SK-N-SH (cell line): ENCODE measurements at regions of chr3 and their contacts with region 1.

Region 1: DNA sequence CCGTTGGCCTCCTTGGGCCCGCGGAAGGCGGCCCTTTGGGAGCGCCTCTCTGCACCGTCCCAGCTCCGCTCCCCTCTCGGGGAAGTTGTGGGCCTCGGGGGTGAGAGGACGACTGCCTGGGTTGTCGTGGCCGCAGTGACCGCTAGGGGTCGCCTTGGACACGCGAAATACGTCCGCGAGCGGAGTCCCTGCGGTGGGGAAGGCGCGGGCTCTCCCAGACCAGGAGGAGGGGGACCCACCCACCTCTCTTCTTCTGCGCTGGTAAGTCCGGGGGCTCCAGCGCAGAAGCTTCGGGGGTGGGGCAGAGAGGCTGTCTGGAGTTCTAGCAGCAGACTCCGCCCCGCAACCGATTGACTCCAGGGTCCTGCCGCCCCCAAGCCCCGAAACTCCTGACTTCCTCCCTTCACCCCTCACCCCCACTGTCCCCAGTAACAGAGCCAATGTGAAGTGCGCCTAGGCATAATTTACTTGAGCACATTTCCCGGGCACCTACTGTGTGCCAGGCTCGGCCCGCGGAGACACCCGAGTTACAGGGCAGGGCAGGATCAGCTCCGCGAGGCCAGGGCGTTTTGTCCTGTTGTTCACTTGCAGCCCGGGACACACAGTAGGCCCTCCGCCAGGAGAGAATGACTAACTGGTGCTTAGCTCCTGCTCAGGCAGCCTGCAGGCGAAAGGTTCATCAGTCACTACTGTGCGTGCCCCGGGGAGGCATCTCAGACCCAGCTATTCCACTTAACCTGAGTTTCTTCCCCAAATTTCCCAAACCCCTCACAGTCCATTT is 32.8 kb downstream of the DNASE1L3 start:
- DNase-seq: peak; percentile 93
- H3K4me3 ChIP-seq: peak overlapping the region; percentile 41 to 56
- H3K27ac ChIP-seq: no peak overlapping the region
- H3K4me1 ChIP-seq: peaks cover 0 to 4% of the 10 kb centered on the region in 2 experiments; a peak in 1 of 4 replicates
- H3K27me3 ChIP-seq: no peaks in the 10 kb centered on the region
- CTCF ChIP-seq: peak; percentile 89
- EP300 ChIP-seq: no peak
- RAD21 ChIP-seq: peak; percentile 78

Region 2: DNA sequence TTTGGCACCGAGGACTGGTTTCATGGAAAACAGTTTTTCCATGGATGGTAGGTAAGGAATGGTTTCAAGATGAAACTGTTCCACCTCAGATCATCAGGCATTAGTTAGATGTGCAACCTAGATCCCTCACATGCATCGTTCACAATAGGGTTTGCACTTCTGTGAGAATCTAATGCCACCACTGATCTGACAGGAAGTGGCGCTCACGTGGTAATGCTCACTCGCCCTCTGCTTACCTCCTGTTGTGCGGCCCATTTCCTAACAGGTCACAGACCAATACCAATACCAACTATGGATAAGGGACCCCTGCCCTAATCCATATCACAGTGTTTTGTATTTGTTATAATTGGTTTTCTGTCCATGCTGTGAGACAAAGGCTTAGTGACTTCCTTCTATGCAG is 362.9 kb before region 1 on chr3:
- CTCF ChIA-PET with region 1: no interaction called
- POLR2A ChIA-PET with region 1: no interaction called
- DNase-seq: no peak
- H3K4me3 ChIP-seq: no peak overlapping the region
- H3K27ac ChIP-seq: no peak overlapping the region
- H3K4me1 ChIP-seq: peaks cover 0 to 5% of the 10 kb centered on the region in 2 experiments; a peak in 2 of 4 replicates
- H3K27me3 ChIP-seq: no peaks in the 10 kb centered on the region
- CTCF ChIP-seq: no peak
- EP300 ChIP-seq: no peak
- RAD21 ChIP-seq: no peak

Region 3: DNA sequence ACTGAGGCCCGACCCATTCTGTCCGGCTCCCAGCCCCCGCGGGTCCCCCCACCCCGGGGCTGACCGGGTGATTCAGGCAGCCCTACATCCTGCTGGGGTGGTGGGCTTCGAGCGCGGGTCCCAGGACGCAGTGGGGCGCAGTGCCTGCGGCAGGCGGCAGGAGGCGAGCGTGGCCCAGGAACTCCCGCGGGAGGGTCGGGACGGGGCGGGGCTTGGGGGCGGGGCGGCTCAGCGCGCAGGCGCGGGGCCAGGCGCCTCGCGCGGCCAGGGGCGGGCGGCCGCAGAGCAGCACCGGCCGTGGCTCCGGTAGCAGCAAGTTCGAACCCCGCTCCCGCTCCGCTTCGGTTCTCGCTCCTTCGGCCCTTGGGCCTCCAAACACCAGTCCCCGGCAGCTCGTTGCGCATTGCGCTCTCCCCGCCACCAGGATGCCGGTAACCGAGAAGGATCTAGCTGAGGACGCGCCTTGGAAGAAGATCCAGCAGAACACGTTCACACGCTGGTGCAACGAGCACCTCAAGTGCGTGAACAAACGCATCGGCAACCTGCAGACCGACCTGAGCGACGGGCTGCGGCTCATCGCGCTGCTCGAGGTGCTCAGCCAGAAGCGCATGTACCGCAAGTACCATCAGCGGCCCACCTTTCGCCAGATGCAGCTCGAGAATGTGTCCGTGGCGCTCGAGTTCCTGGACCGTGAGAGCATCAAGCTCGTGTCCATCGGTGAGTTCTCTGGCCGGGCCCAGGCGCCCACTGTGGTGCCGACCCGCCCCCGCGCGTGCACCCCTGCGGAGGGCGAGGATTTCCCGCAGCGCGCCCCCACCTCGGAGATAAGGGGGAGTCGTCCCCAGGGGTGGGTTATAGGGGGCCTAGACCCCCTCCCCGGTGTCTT is 169.6 kb before region 1 on chr3 and contains the start of gene FLNB:
- CTCF ChIA-PET with region 1: interaction called, 39 read pairs
- POLR2A ChIA-PET with region 1: interaction called, 3 read pairs
- DNase-seq: peak; percentile 99
- H3K4me3 ChIP-seq: peak within 1 kb of the TSS; percentile 86 to 100
- H3K27ac ChIP-seq: peak within 1 kb of the TSS; percentile 62 to 85
- H3K4me1 ChIP-seq: peaks cover 10 to 33% of the 10 kb centered on the region in 2 experiments; a peak in 3 of 4 replicates
- H3K27me3 ChIP-seq: no peaks in the 10 kb centered on the region
- CTCF ChIP-seq: peak; percentile 68
- EP300 ChIP-seq: no peak
- RAD21 ChIP-seq: peak; percentile 76
- polyA plus RNA-seq, gene FLNB: 115 and 127 TPM in 2 replicates

Region 4: DNA sequence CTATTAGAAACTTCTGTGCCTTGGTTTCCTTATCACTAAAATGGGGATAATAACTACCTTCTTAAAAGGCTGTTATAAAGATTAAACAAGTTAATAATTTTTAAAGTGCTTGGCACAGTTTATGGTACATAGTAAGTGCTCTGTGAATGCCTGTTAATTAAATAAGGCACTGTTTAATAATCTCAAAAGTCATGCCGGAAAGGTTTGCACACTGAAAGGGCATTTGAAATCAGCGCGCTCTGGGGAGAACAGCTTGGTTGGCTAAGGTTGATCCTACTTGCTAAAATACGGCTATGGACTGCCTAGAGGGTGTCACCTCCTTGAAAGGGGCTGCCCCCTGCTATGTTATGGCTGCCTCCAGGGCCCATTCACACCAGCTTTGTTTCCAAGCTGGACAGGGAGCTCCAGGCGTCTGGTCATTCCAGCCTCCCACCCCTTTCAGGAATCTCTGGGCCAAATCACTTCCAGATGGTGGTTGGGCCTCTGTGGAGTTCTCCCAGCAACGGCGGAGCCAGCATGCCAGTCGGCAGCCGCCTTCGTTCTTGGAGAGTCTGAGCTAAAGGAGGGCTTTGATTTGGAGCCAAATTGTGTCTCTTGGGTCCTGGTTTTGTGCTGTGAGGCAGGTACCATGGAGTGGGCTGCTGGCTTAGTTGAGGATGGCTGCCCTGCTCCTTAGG is 163.8 kb before region 1 on chr3:
- CTCF ChIA-PET with region 1: interaction called, 39 read pairs
- POLR2A ChIA-PET with region 1: no interaction called
- DNase-seq: peak; percentile 89
- H3K4me3 ChIP-seq: peak overlapping the region; percentile 6 to 47; a peak in 3 of 4 replicates
- H3K27ac ChIP-seq: peak overlapping the region; percentile 85 to 93
- H3K4me1 ChIP-seq: peaks cover 28 to 52% of the 10 kb centered on the region in 2 experiments
- H3K27me3 ChIP-seq: no peaks in the 10 kb centered on the region
- CTCF ChIP-seq: no peak
- EP300 ChIP-seq: peak; percentile 80 to 87
- RAD21 ChIP-seq: peak; percentile 18

Region 5: DNA sequence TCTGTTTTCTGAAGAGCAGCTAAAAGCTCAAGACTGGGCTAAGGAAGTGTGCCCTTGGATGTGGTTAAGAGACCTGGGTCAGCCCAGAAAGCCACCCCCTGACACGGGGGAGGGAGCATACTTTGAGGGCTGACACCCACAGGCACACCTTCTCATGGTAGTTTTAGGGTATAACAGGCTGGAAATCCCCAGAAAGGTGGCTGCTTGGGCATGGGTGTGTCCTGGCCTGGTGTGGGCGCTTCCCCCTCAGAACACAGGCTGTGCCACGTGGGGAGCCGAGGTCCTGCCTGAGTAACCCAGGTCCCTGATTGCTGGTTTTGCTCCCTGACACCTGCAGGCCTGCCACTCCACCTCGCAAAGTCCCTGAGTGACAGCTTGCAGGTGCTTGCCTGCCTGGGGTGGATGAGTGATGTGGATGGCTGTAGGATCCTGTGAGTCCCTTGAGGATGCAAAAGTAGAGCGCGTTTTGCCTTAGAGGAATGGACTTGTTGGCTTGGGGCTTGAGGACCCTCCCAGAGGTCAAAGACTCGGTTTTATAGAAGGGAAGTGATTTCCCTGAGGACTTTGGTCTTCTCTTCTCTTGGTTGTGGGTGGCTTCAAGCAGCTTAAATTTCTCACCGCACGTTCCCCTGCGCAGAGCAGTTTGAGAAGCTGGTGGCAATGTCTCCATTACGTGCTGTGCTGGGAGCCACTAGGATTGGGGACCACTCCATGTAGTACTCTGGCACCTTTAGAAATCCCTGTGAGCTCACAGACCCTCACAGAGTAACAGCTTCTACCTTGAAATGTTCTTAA is 61.6 kb before region 1 on chr3:
- CTCF ChIA-PET with region 1: no interaction called
- POLR2A ChIA-PET with region 1: no interaction called
- DNase-seq: no peak
- H3K4me3 ChIP-seq: no peak overlapping the region
- H3K27ac ChIP-seq: no peak overlapping the region
- H3K4me1 ChIP-seq: no peaks in the 10 kb centered on the region
- H3K27me3 ChIP-seq: no peaks in the 10 kb centered on the region
- CTCF ChIP-seq: no peak
- EP300 ChIP-seq: no peak
- RAD21 ChIP-seq: no peak

Region 6: DNA sequence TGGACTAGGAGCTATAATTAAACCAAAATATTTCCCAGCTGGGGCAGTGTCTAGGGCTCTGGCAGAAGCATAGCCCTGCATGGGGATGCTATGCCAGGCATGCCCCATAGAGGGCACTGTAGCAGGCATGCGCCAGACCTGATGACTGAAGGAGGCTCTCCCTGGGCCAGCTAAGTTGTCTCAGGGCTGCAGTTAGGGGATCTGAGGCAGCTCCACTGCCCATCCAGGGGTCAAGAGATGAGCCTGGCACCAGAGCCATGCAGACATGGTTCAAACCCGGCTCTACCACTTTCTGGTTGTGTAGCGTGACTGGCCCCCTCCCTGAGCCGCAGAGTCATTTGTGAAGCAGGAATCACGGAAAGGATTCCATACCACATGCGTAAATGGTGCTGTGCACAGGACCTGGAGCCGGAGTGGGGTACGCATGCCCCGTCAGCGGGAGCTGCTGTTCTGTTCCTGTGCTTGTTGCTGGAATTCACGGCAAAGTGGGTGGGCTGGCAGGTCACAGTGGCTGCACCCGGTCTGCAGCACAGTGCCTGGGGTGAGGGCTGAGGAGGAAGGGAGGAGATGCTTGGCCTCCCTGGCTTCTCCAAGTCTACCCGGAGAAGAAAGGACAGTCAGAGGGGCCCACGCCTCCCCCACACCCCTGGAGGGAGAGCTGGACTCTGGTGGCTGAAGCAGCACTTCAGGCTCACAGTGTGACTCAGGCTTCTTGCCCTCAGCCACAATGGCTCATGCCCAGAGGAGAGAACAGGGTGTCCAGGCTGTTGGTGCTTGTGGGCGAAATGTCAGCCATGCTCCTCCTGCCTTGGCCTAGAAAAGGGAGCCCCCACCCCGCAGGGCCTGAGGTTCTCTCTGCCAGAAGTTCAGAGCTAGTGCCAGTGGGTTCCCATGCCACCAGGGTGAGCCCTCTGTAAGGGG is 10.2 kb before region 1 on chr3:
- CTCF ChIA-PET with region 1: interaction called, 68 read pairs
- POLR2A ChIA-PET with region 1: no interaction called
- DNase-seq: peak; percentile 79
- H3K4me3 ChIP-seq: peak overlapping the region in 1 of 2 experiments; percentile 44; a peak in 1 of 4 replicates
- H3K27ac ChIP-seq: no peak overlapping the region
- H3K4me1 ChIP-seq: peaks cover 0 to 25% of the 10 kb centered on the region in 2 experiments; a peak in 2 of 4 replicates
- H3K27me3 ChIP-seq: no peaks in the 10 kb centered on the region
- CTCF ChIP-seq: peak; percentile 91
- EP300 ChIP-seq: no peak
- RAD21 ChIP-seq: peak; percentile 21

Region 7: DNA sequence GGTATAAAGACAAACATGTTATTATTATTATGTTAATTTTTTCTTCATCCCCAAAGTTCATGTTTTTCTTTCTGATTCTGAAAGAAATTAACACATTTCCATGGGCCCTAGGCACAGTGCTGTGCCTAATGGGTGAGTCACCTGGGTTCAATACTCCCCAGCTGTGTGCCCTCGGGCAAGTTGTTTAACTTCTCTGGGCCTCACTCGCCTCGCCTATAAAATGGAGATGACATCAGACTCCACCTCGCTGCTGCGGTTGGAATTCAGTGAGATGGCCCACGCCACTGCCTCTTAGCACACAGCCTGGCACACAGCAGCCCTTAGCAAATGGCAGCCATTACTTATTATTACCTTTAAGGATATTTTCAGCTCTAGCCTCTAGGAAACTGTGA is 10.2 kb after region 1 on chr3:
- CTCF ChIA-PET with region 1: interaction called, 63 read pairs
- POLR2A ChIA-PET with region 1: no interaction called
- DNase-seq: no peak
- H3K4me3 ChIP-seq: no peak overlapping the region
- H3K27ac ChIP-seq: no peak overlapping the region
- H3K4me1 ChIP-seq: no peaks in the 10 kb centered on the region
- H3K27me3 ChIP-seq: no peaks in the 10 kb centered on the region
- CTCF ChIP-seq: no peak
- EP300 ChIP-seq: no peak
- RAD21 ChIP-seq: no peak

Region 8: GRCh38 chr3:58206406-58207011 is 28.6 kb after region 1 on chr3:
- CTCF ChIA-PET with region 1: interaction called, 29 read pairs
- POLR2A ChIA-PET with region 1: no interaction called
- DNase-seq: no peak
- H3K4me3 ChIP-seq: no peak overlapping the region
- H3K27ac ChIP-seq: no peak overlapping the region
- H3K4me1 ChIP-seq: no peaks in the 10 kb centered on the region
- H3K27me3 ChIP-seq: peaks cover under 1% of the 10 kb centered on the region; the same call in 1 of the 2 replicates
- CTCF ChIP-seq: no peak
- EP300 ChIP-seq: no peak
- RAD21 ChIP-seq: no peak

Region 9: GRCh38 chr3:58299839-58300516 is 122.0 kb after region 1 on chr3:
- CTCF ChIA-PET with region 1: interaction called, 60 read pairs
- POLR2A ChIA-PET with region 1: no interaction called
- DNase-seq: peak; percentile 47
- H3K4me3 ChIP-seq: no peak overlapping the region
- H3K27ac ChIP-seq: no peak overlapping the region
- H3K4me1 ChIP-seq: no peaks in the 10 kb centered on the region; a peak in 1 of 4 replicates
- H3K27me3 ChIP-seq: no peaks in the 10 kb centered on the region; the same call in 1 of the 2 replicates
- CTCF ChIP-seq: peak; percentile 85
- EP300 ChIP-seq: no peak
- RAD21 ChIP-seq: peak; percentile 79